Mammary epithelial cell (primary cell): ENCODE measurements at regions of chr12 and their contacts with region 1.

Region 1: DNA sequence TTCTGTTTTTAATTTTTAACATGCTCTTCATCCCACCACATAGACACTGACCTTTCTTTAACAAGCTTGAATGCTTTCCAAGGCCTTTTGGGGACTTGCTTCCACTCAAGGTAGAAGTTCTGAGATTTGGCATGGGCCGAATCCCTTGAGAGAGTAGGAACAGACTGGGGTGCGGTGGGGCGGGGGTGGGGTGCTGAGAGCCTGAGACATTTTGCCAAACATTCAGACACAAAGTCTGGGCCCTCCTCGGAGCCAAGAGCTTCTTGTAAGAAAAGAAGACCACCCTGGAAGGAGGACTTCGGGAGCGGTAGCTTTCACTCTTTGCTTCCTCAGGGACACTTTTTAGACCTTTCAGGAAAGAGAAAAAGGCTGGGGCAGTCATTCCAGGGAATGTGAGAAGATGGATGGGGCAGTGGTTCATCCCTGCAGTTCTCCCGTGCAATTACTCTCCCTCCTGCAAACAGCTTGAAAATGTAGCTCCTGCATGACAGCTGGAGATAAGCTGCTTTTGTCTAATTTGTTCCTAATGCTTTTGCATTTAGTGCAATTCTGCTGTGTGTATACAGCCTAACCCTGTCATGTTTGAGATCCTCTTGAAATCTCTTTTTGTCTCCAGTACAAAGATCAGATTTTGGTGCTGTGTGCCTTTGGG is 16.3 kb upstream of the MYO1H start:
- DNase-seq: no peak
- H3K4me3 ChIP-seq: no peak overlapping the region
- H3K27ac ChIP-seq: no peak overlapping the region
- H3K4me1 ChIP-seq: no peaks in the 10 kb centered on the region
- H3K27me3 ChIP-seq: no peaks in the 10 kb centered on the region
- CTCF ChIP-seq: no peak

Region 2: DNA sequence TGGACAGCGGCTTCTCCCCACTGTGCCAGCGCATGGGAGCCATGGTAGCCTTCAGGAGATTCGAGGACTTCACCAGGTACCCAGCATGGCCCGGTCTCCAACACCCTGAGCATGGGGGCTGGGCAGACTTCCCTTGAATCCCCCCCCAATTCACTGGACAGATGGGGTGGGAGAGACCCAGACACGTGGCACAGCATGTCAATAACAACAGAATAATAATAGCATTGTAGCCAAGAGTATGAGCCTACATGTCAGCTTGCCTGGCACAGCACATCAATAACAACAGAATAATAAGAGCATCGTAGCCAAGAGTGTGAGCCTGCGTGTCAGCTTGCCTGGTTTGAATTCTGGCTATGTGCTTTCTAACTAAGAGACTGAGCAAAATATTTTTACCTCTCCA is 98.7 kb before region 1 on chr12:
- CTCF ChIA-PET with region 1: no interaction called
- dilution Hi-C with region 1: loop called (anchors 5 kb)
- in situ Hi-C with region 1: no loop called
- intact Hi-C with region 1: no loop called
- DNase-seq: no peak
- H3K4me3 ChIP-seq: no peak overlapping the region
- H3K27ac ChIP-seq: no peak overlapping the region
- H3K4me1 ChIP-seq: no peaks in the 10 kb centered on the region
- H3K27me3 ChIP-seq: no peaks in the 10 kb centered on the region
- CTCF ChIP-seq: no peak

Region 3: DNA sequence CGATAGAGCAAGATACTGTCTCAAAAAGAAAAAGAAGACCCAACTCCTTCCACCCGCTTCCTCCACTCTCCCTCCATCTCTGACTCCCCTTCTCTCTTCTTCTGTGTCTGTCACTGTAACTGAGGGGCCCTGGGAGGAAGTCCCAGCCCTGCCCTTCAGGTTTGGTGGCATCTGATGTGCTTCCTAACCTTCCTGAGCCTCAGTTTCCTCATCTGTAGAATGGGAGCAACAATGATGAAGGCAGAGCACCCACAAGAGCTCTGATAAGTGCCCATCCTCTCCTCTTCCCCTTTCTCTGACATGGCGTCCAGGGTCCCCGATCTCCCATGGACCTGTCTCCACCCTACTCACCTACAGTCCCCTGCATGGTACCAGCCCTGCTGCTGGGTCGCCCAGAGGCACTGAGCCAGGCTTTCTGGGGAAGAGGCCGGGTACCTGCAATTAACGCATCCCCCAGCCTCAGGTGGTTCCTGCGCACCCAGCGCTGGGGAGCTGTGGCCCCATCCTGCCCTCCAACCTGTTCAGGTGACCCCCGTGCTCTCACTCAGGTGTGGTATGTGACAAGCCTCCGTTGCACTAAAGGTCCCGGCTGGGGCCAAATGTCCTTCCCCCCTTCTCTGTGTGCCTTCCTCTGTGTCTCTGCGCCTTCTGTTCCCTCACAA is 35.5 kb before region 1 on chr12:
- CTCF ChIA-PET with region 1: no interaction called
- dilution Hi-C with region 1: loop called (anchors 5 kb)
- in situ Hi-C with region 1: no loop called
- intact Hi-C with region 1: no loop called
- DNase-seq: no peak
- H3K4me3 ChIP-seq: no peak overlapping the region
- H3K27ac ChIP-seq: no peak overlapping the region
- H3K4me1 ChIP-seq: peaks cover 2% of the 10 kb centered on the region
- H3K27me3 ChIP-seq: peaks cover 3% of the 10 kb centered on the region
- CTCF ChIP-seq: no peak